PC-3 (cell line): ENCODE measurements at regions of chr20 and their contacts with region 1.

Region 1: DNA sequence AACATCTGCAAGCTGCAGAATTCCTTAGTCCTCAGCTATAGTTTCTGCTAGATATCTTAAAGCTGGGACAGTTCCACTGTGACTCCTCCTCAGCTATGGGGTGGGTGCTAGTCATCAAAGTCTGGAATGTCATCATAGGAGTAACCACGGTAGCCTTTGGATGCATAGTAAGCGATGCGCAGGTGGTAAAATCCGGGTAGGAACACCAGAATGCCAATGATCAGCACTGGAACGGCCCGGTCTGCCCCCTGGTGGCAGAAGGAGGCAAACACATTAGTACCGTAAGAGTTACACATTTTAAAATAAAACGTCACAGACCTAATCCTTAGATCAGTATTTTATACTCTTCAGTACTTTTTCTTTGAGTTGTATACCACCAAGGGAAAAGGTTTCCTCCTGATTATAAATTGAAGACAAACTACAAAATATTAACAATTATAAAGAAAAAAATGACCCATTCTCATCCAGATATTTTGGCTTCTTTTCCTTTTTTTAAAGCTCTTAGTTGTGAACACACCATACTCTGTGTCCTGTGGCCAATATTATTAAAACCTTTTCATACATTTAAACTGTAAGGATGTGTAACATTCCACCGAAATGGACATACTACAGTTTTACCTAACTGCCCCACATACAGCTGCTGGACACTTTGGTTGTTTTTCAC is 18.9 kb downstream of the PCNA start:
- DNase-seq: peak; percentile 85
- ATAC-seq: peak; percentile 95
- H3K4me3 ChIP-seq: no peak overlapping the region
- H3K27ac ChIP-seq: no peak overlapping the region
- H3K4me1 ChIP-seq: no peaks in the 10 kb centered on the region
- H3K27me3 ChIP-seq: no peaks in the 10 kb centered on the region
- CTCF ChIP-seq: peak; percentile 90

Region 2: GRCh38 chr20:4607287-4607713 is 493.5 kb before region 1 on chr20:
- CTCF ChIA-PET with region 1: no interaction called
- POLR2A ChIA-PET with region 1: no interaction called
- intact Hi-C with region 1: loop called (anchors 1 kb)
- DNase-seq: peak; percentile 83
- ATAC-seq: peak; percentile 70
- H3K4me3 ChIP-seq: no peak overlapping the region
- H3K27ac ChIP-seq: no peak overlapping the region
- H3K4me1 ChIP-seq: peaks cover 18% of the 10 kb centered on the region
- H3K27me3 ChIP-seq: no peaks in the 10 kb centered on the region
- CTCF ChIP-seq: peak; percentile 96

Region 3: GRCh38 chr20:4956200-4956810 is 144.5 kb before region 1 on chr20:
- CTCF ChIA-PET with region 1: no interaction called
- POLR2A ChIA-PET with region 1: no interaction called
- intact Hi-C with region 1: loop called (anchors 1 kb)
- DNase-seq: peak; percentile 86
- ATAC-seq: peak; percentile 28; the same call in 1 of the 2 replicates
- H3K4me3 ChIP-seq: no peak overlapping the region
- H3K27ac ChIP-seq: no peak overlapping the region
- H3K4me1 ChIP-seq: no peaks in the 10 kb centered on the region
- H3K27me3 ChIP-seq: no peaks in the 10 kb centered on the region
- CTCF ChIP-seq: peak; percentile 96

Region 4: GRCh38 chr20:5000263-5001173 is 100.3 kb before region 1 on chr20:
- CTCF ChIA-PET with region 1: no interaction called
- POLR2A ChIA-PET with region 1: no interaction called
- intact Hi-C with region 1: loop called (anchors 1 kb)
- DNase-seq: no peak
- ATAC-seq: peak; percentile 52
- H3K4me3 ChIP-seq: peak overlapping the region; percentile 84
- H3K27ac ChIP-seq: no peak overlapping the region
- H3K4me1 ChIP-seq: peaks cover 13% of the 10 kb centered on the region
- H3K27me3 ChIP-seq: no peaks in the 10 kb centered on the region
- CTCF ChIP-seq: no peak

Region 5: GRCh38 chr20:5056801-5057599 is 43.8 kb before region 1 on chr20:
- CTCF ChIA-PET with region 1: interaction called, 4 read pairs
- POLR2A ChIA-PET with region 1: no interaction called
- intact Hi-C with region 1: loop called (anchors 1 kb)
- DNase-seq: peak; percentile 71
- ATAC-seq: peak; percentile 44
- H3K4me3 ChIP-seq: no peak overlapping the region
- H3K27ac ChIP-seq: no peak overlapping the region
- H3K4me1 ChIP-seq: peaks cover 16% of the 10 kb centered on the region
- H3K27me3 ChIP-seq: no peaks in the 10 kb centered on the region
- CTCF ChIP-seq: peak; percentile 76

Region 6: DNA sequence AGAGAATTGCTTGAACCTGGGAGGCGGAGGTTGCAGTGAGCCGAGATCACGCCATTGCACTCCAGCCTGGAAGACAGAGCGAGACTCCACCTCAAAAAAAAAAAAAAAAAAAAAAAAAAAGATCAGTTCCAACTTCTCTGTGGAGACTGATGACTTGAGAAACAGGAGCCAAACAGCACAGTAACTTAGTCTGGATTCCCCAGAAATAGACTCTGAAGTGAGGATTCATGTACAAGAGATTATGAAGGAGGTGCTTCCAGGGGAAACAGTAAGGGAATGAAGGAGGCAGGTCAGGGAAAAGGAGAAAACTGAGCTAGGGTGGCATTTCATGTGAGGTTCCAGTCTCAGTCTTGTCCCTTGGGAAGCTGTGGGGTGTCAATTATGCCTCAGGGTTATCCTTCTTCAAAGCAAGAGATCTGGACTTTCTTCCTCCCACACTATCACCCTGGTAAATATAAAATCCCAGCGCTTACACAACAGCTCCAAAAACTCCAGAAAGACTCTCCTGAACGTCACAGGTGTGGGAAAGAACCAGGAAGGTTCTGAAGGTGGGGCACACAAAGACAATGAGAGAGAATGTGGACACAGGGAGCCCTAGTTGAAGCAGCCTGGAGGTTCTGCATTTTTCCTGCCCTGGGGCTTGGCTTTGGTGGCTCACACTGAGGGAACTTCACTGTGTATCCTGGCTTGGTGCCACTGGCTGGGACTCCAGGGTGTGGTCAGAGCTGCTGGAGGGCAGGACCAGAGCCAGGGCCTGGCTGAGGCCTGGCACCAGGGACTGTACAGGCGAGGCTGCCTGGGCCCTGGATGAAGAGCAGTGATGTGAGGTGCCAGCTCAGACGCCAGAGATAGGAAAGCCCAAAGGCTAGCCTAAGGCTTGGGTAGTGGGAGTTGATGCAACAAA is 27.8 kb before region 1 on chr20:
- CTCF ChIA-PET with region 1: interaction called, 3 read pairs
- POLR2A ChIA-PET with region 1: no interaction called
- intact Hi-C with region 1: loop called (anchors 1 kb)
- DNase-seq: peak; percentile 98
- ATAC-seq: peak; percentile 99
- H3K4me3 ChIP-seq: no peak overlapping the region
- H3K27ac ChIP-seq: peak overlapping the region; percentile 88
- H3K4me1 ChIP-seq: peaks cover 20% of the 10 kb centered on the region
- H3K27me3 ChIP-seq: no peaks in the 10 kb centered on the region
- CTCF ChIP-seq: no peak

Region 7: DNA sequence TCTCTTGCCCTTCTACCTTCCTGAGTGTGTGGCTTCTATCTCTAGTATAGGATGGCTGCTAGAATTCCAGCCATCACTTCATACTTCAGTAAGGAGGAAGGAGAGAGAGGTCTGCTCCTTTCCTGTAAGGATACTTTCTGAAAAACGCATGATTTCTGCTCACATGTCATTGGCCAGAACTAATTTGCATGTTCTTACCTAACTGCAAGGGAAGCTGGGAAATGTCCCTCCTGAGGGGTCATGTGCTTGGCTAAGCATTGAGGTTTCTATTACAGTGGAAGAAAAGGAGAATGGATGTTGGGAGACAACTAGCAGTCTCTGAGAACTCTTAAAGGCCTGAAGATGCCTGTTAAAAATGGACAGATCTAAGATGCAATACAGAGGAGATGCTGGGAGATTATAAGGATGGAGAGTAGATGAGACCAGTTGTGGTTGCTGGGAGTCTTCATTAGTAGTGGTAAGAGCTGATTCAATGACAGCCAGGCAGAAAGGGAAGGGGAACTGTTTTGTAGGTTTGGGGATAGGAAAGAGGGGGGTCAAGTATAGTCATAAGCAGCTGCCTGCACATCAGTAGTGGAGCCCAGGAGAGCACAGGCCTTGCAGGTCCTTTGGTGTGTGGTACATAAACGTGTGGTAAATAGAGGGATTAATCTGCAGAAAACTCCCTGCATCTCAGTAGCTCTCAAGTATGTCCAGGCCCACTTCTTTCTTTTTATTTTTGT is 46.2 kb after region 1 on chr20:
- CTCF ChIA-PET with region 1: no interaction called
- POLR2A ChIA-PET with region 1: no interaction called
- intact Hi-C with region 1: no loop called
- DNase-seq: no peak
- ATAC-seq: no peak
- H3K4me3 ChIP-seq: no peak overlapping the region
- H3K27ac ChIP-seq: no peak overlapping the region
- H3K4me1 ChIP-seq: peaks cover 2% of the 10 kb centered on the region; the same call in 1 of the 2 replicates
- H3K27me3 ChIP-seq: no peaks in the 10 kb centered on the region
- CTCF ChIP-seq: no peak

Region 8: GRCh38 chr20:5171064-5171789 is 70.4 kb after region 1 on chr20:
- CTCF ChIA-PET with region 1: no interaction called
- POLR2A ChIA-PET with region 1: no interaction called
- intact Hi-C with region 1: no loop called
- DNase-seq: no peak
- ATAC-seq: no peak
- H3K4me3 ChIP-seq: no peak overlapping the region
- H3K27ac ChIP-seq: no peak overlapping the region
- H3K4me1 ChIP-seq: peaks cover 14% of the 10 kb centered on the region
- H3K27me3 ChIP-seq: no peaks in the 10 kb centered on the region
- CTCF ChIP-seq: no peak

Region 9: GRCh38 chr20:5642155-5642981 is 541.6 kb after region 1 on chr20:
- CTCF ChIA-PET with region 1: no interaction called
- POLR2A ChIA-PET with region 1: no interaction called
- intact Hi-C with region 1: no loop called
- DNase-seq: no peak
- ATAC-seq: no peak
- H3K4me3 ChIP-seq: no peak overlapping the region
- H3K27ac ChIP-seq: no peak overlapping the region
- H3K4me1 ChIP-seq: peaks cover 15% of the 10 kb centered on the region
- H3K27me3 ChIP-seq: no peaks in the 10 kb centered on the region
- CTCF ChIP-seq: no peak